Naive thymus-derived CD4-positive, alpha-beta T cell (primary cell): ENCODE measurements at regions of chr11 and their contacts with region 1.

Region 1: GRCh38 chr11:104609311-104610085 is 288.8 kb downstream of the CASP12 start:
- DNase-seq: peak in 7 of 9 donors; percentile 17 to 63 (median 51)
- ATAC-seq: peak; percentile 95
- H3K4me3 ChIP-seq: no peak overlapping the region
- H3K4me3 Mint-ChIP-seq: no peak overlapping the region
- H3K27ac ChIP-seq: no peak overlapping the region
- H3K27ac Mint-ChIP-seq: peak overlapping the region in 3 of 9 donors; percentile 25 to 47 (median 41)
- H3K4me1 ChIP-seq: peaks cover 0 to 5% of the 10 kb centered on the region in 2 donors
- H3K4me1 Mint-ChIP-seq: peaks cover 0 to 20% (median 11%) of the 10 kb centered on the region in 7 donors
- H3K27me3 ChIP-seq: no peaks in the 10 kb centered on the region
- H3K27me3 Mint-ChIP-seq: peaks cover 0 to 6% (median 0%) of the 10 kb centered on the region in 5 donors

Region 2: DNA sequence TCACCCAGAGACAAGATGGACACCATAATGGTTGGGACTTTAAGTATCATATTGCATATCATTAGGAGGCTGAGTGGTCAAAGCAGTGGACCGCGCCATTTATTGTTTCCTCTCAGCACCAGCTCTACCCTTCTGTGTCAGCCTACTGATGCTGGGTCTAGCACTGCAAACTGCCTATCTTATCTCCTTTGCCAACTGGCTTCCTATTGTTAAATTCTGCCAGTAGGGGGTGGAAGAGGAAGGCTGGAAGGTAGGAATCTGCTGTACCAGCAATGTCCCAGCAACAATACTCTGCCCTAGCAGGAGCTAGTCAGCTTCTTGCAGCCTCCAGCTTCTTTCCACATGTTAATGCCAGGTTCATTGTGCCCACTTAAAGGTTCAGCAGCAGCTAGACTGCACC is 78.4 kb before region 1 on chr11:
- CTCF ChIA-PET with region 1: no interaction called
- POLR2A ChIA-PET with region 1: no interaction called
- intact Hi-C with region 1: no loop called
- DNase-seq: peak in 6 of 9 donors; percentile 11 to 37 (median 22)
- ATAC-seq: peak; percentile 59
- H3K4me3 ChIP-seq: no peak overlapping the region
- H3K4me3 Mint-ChIP-seq: no peak overlapping the region
- H3K27ac ChIP-seq: no peak overlapping the region
- H3K27ac Mint-ChIP-seq: no peak overlapping the region
- H3K4me1 ChIP-seq: no peaks in the 10 kb centered on the region
- H3K4me1 Mint-ChIP-seq: no peaks in the 10 kb centered on the region
- H3K27me3 ChIP-seq: no peaks in the 10 kb centered on the region
- H3K27me3 Mint-ChIP-seq: peaks cover 0 to 4% (median 3%) of the 10 kb centered on the region in 5 donors

Region 3: GRCh38 chr11:104799251-104799650 is 189.8 kb after region 1 on chr11:
- CTCF ChIA-PET with region 1: interaction called, 7 read pairs
- POLR2A ChIA-PET with region 1: interaction called, 3 read pairs
- intact Hi-C with region 1: loop called in 1 of 2 experiments (anchors 5 kb)
- DNase-seq: peak in 2 of 9 donors; percentile 4 to 9
- ATAC-seq: peak; percentile 31
- H3K4me3 ChIP-seq: peak overlapping the region; percentile 33
- H3K4me3 Mint-ChIP-seq: peak overlapping the region; percentile 63 to 90 (median 85)
- H3K27ac ChIP-seq: no peak overlapping the region
- H3K27ac Mint-ChIP-seq: peak overlapping the region; percentile 69 to 95 (median 85)
- H3K4me1 ChIP-seq: peaks cover 0 to 10% of the 10 kb centered on the region in 2 donors
- H3K4me1 Mint-ChIP-seq: peaks cover 10 to 53% (median 40%) of the 10 kb centered on the region in 7 donors
- H3K27me3 ChIP-seq: no peaks in the 10 kb centered on the region
- H3K27me3 Mint-ChIP-seq: no peaks in the 10 kb centered on the region

Region 4: DNA sequence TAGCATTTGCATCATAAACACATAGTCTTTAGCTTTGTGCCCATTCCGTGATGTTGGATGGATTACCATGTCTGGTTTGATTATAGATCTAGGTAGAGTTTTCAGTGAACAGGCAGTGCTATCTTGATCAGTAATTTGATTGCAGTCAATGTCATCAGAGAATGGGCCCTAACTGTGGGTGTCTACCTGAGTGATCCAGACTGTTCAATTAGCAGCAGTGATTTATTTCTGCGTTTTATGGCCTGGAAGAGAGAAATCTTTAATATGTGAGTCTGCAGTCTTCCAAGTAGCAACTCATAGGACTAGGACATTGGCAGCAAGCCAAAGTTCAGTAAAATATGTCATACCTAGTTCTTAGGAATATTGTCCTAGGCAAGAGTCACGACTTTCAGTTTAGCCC is 208.5 kb after region 1 on chr11:
- CTCF ChIA-PET with region 1: no interaction called
- POLR2A ChIA-PET with region 1: no interaction called
- intact Hi-C with region 1: no loop called
- DNase-seq: no peak
- ATAC-seq: no peak
- H3K4me3 ChIP-seq: no peak overlapping the region
- H3K4me3 Mint-ChIP-seq: no peak overlapping the region
- H3K27ac ChIP-seq: no peak overlapping the region
- H3K27ac Mint-ChIP-seq: peak overlapping the region in 1 of 9 donors; percentile 57
- H3K4me1 ChIP-seq: no peaks in the 10 kb centered on the region
- H3K4me1 Mint-ChIP-seq: peaks cover 0 to 8% (median 0%) of the 10 kb centered on the region in 7 donors
- H3K27me3 ChIP-seq: no peaks in the 10 kb centered on the region
- H3K27me3 Mint-ChIP-seq: peaks cover 0 to 7% (median 0%) of the 10 kb centered on the region in 5 donors

Region 5: GRCh38 chr11:104918113-104918824 is 308.8 kb after region 1 on chr11:
- CTCF ChIA-PET with region 1: no interaction called
- POLR2A ChIA-PET with region 1: no interaction called
- intact Hi-C with region 1: loop called in 1 of 2 experiments (anchors 1 kb)
- DNase-seq: peak in 4 of 9 donors; percentile 14 to 46 (median 32)
- ATAC-seq: peak; percentile 82
- H3K4me3 ChIP-seq: peak overlapping the region; percentile 60
- H3K4me3 Mint-ChIP-seq: peak overlapping the region; percentile 76 to 99 (median 91)
- H3K27ac ChIP-seq: peak overlapping the region; percentile 65
- H3K27ac Mint-ChIP-seq: peak overlapping the region; percentile 58 to 97 (median 92)
- H3K4me1 ChIP-seq: peaks cover 12 to 34% of the 10 kb centered on the region in 2 donors
- H3K4me1 Mint-ChIP-seq: peaks cover 30 to 72% (median 55%) of the 10 kb centered on the region in 7 donors
- H3K27me3 ChIP-seq: no peaks in the 10 kb centered on the region
- H3K27me3 Mint-ChIP-seq: peaks cover 0 to 3% (median 0%) of the 10 kb centered on the region in 5 donors

Region 6: DNA sequence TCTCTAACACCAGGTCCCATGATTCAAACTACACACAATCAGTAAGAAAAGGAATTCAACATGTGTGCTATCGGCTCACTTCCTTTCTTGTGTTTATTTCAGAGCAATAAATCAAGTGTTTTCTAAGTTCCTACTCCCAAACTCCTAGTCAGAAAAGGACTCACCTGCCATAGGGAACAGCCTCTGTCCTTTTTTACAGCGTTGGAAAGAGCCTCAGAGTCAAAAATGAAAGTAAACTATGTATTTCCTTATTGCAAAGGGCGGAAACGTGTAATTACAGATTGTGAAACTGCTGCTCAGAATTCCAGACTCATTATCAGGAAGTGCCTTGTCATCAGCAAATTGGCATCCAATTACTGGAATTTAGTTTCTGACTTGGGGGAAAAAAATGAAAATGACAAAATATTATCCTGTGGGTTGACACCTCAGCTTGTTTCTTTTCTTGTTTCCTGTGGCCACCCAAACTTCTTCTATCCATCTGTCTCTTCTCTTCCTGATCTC is 358.9 kb after region 1 on chr11 and contains the start of gene CASP4:
- CTCF ChIA-PET with region 1: interaction called, 3 read pairs
- POLR2A ChIA-PET with region 1: no interaction called
- intact Hi-C with region 1: loop called in 1 of 2 experiments (anchors 1 kb)
- DNase-seq: peak in 7 of 9 donors; percentile 18 to 57 (median 48)
- ATAC-seq: peak; percentile 82
- H3K4me3 ChIP-seq: peak within 1 kb of the TSS; percentile 67
- H3K4me3 Mint-ChIP-seq: peak within 1 kb of the TSS; percentile 90 to 99 (median 96)
- H3K27ac ChIP-seq: peak within 1 kb of the TSS; percentile 89
- H3K27ac Mint-ChIP-seq: peak within 1 kb of the TSS; percentile 94 to 100 (median 97)
- H3K4me1 ChIP-seq: peaks cover 16 to 36% of the 10 kb centered on the region in 2 donors
- H3K4me1 Mint-ChIP-seq: peaks cover 35 to 47% (median 43%) of the 10 kb centered on the region in 7 donors
- H3K27me3 ChIP-seq: no peaks in the 10 kb centered on the region
- H3K27me3 Mint-ChIP-seq: no peaks in the 10 kb centered on the region
- total RNA-seq, gene CASP4: 60.7 to 94.7 (median 76.9) TPM

Region 7: GRCh38 chr11:105392556-105392955 is 783.1 kb after region 1 on chr11:
- CTCF ChIA-PET with region 1: no interaction called
- POLR2A ChIA-PET with region 1: no interaction called
- intact Hi-C with region 1: loop called in 1 of 2 experiments (anchors 5 kb)
- DNase-seq: no peak
- ATAC-seq: no peak
- H3K4me3 ChIP-seq: no peak overlapping the region
- H3K4me3 Mint-ChIP-seq: no peak overlapping the region
- H3K27ac ChIP-seq: no peak overlapping the region
- H3K27ac Mint-ChIP-seq: no peak overlapping the region
- H3K4me1 ChIP-seq: no peaks in the 10 kb centered on the region
- H3K4me1 Mint-ChIP-seq: no peaks in the 10 kb centered on the region
- H3K27me3 ChIP-seq: no peaks in the 10 kb centered on the region
- H3K27me3 Mint-ChIP-seq: no peaks in the 10 kb centered on the region